Activated CD4-positive, alpha-beta T cell treated with anti-CD3 and anti-CD28 coated beads, Interleukin-2, amount 10 ng/mL, durations not matched to agents 7 days and 5 days (primary cell): ENCODE measurements at regions of chr6 and their contacts with region 1.

Region 1: GRCh38 chr6:24991810-24992467 is 56.2 kb upstream of the RIPOR2 start:
- DNase-seq: peak; percentile 89
- H3K4me3 Mint-ChIP-seq: peak overlapping the region; percentile 12
- H3K27ac Mint-ChIP-seq: peak overlapping the region; percentile 74
- H3K4me1 Mint-ChIP-seq: peaks cover 52% of the 10 kb centered on the region
- H3K27me3 Mint-ChIP-seq: no peaks in the 10 kb centered on the region

Region 2: GRCh38 chr6:24899997-24900325 is 92.0 kb before region 1 on chr6:
- CTCF ChIA-PET with region 1: interaction called, 11 read pairs
- POLR2A ChIA-PET with region 1: no interaction called
- DNase-seq: peak; percentile 39
- H3K4me3 Mint-ChIP-seq: peak overlapping the region; percentile 33
- H3K27ac Mint-ChIP-seq: peak overlapping the region; percentile 66
- H3K4me1 Mint-ChIP-seq: peaks cover 82% of the 10 kb centered on the region
- H3K27me3 Mint-ChIP-seq: no peaks in the 10 kb centered on the region

Region 3: GRCh38 chr6:24933868-24934401 is 58.0 kb before region 1 on chr6:
- CTCF ChIA-PET with region 1: interaction called, 36 read pairs
- POLR2A ChIA-PET with region 1: interaction called, 10 read pairs
- DNase-seq: peak; percentile 68
- H3K4me3 Mint-ChIP-seq: peak overlapping the region; percentile 92
- H3K27ac Mint-ChIP-seq: peak overlapping the region; percentile 99
- H3K4me1 Mint-ChIP-seq: peaks cover 58% of the 10 kb centered on the region
- H3K27me3 Mint-ChIP-seq: no peaks in the 10 kb centered on the region

Region 4: DNA sequence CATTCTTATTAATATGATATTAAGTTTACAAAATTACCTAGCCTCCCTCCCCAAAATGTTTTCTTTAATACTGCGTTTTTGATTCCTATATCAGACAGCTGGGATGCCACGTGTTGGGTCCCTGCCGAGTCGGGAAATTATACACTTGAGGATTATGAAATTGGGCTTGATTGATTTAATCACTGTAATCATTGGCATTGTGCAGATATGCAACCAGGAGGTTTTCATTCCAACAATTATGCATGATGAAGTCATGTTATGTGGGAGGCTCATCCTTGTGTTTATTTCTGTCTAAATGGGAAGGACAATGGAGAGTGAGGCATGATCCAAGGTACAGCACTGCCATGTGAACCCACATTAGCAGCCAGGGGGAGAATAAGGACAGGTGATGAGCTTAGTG is 25.6 kb before region 1 on chr6:
- CTCF ChIA-PET with region 1: interaction called, 18 read pairs
- POLR2A ChIA-PET with region 1: no interaction called
- DNase-seq: no peak
- H3K4me3 Mint-ChIP-seq: no peak overlapping the region
- H3K27ac Mint-ChIP-seq: no peak overlapping the region
- H3K4me1 Mint-ChIP-seq: peaks cover 49% of the 10 kb centered on the region
- H3K27me3 Mint-ChIP-seq: no peaks in the 10 kb centered on the region

Region 5: GRCh38 chr6:24980507-24981387 is 11.2 kb before region 1 on chr6:
- CTCF ChIA-PET with region 1: interaction called, 22 read pairs
- POLR2A ChIA-PET with region 1: no interaction called
- DNase-seq: no peak
- H3K4me3 Mint-ChIP-seq: no peak overlapping the region
- H3K27ac Mint-ChIP-seq: no peak overlapping the region
- H3K4me1 Mint-ChIP-seq: peaks cover 19% of the 10 kb centered on the region
- H3K27me3 Mint-ChIP-seq: no peaks in the 10 kb centered on the region

Region 6: DNA sequence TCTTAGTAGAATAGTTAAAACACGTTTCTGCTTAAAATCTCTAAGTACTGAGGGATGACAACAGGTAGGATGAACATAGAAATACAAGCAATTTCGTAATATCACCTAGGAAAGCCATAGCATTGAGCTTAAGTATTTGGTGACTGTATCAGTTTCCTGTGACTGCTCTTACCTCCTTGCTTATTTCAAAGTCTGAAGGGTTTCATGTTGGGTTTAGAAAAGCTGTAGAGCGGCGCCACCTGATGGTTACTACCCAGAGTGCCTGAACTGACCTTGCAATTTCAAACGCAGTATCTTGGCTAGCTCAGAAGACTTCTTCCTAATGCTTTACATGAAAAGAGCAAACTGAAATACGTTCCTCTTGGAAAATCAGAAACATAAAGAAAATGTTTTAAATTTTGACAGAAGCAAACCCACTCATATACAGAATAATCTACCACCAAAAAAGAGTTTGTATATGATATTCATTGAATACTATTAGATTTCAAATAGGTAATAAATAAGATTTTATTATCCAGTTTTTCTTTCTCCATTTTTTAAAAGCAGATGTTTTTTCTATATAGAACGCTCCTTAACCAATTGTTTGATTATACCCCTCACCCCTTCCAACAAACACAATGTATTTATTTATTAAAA is 26.1 kb after region 1 on chr6:
- CTCF ChIA-PET with region 1: interaction called, 19 read pairs
- POLR2A ChIA-PET with region 1: no interaction called
- DNase-seq: peak; percentile 85
- H3K4me3 Mint-ChIP-seq: no peak overlapping the region
- H3K27ac Mint-ChIP-seq: peak overlapping the region; percentile 52
- H3K4me1 Mint-ChIP-seq: peaks cover 41% of the 10 kb centered on the region
- H3K27me3 Mint-ChIP-seq: no peaks in the 10 kb centered on the region

Region 7: GRCh38 chr6:25042536-25043282 is 50.8 kb after region 1 on chr6:
- CTCF ChIA-PET with region 1: no interaction called
- POLR2A ChIA-PET with region 1: no interaction called
- DNase-seq: peak; percentile 48
- H3K4me3 Mint-ChIP-seq: peak overlapping the region; percentile 94
- H3K27ac Mint-ChIP-seq: peak overlapping the region; percentile 95
- H3K4me1 Mint-ChIP-seq: peaks cover 52% of the 10 kb centered on the region
- H3K27me3 Mint-ChIP-seq: no peaks in the 10 kb centered on the region